Panc1 (cell line): ENCODE measurements at regions of chr10 and their contacts with region 1.

Region 1: GRCh38 chr10:77710759-77711682 is 73.4 kb upstream of the KCNMA1 start:
- DNase-seq: peak; percentile 36
- ATAC-seq: peak; percentile 98
- H3K4me3 ChIP-seq: peak overlapping the region; percentile 28 to 42
- H3K27ac ChIP-seq: no peak overlapping the region
- H3K4me1 ChIP-seq: no peaks in the 10 kb centered on the region; the same call in 1 of the 2 replicates
- H3K27me3 ChIP-seq: no peaks in the 10 kb centered on the region
- CTCF ChIP-seq: peak; percentile 100

Region 2: GRCh38 chr10:77165445-77166208 is 545.4 kb before region 1 on chr10:
- CTCF ChIA-PET with region 1: interaction called, 6 read pairs
- POLR2A ChIA-PET with region 1: no interaction called
- in situ Hi-C with region 1: no loop called
- intact Hi-C with region 1: loop called (anchors 5 kb)
- DNase-seq: peak; percentile 88
- ATAC-seq: peak; percentile 78
- H3K4me3 ChIP-seq: no peak overlapping the region
- H3K27ac ChIP-seq: peak overlapping the region; percentile 0; the same call in 1 of the 2 replicates
- H3K4me1 ChIP-seq: peaks cover 28% of the 10 kb centered on the region
- H3K27me3 ChIP-seq: no peaks in the 10 kb centered on the region
- CTCF ChIP-seq: no peak; the same call in 1 of the 2 replicates

Region 3: GRCh38 chr10:77207828-77208185 is 503.2 kb before region 1 on chr10:
- CTCF ChIA-PET with region 1: interaction called, 13 read pairs
- POLR2A ChIA-PET with region 1: no interaction called
- in situ Hi-C with region 1: no loop called
- intact Hi-C with region 1: no loop called
- DNase-seq: no peak
- ATAC-seq: no peak
- H3K4me3 ChIP-seq: no peak overlapping the region
- H3K27ac ChIP-seq: no peak overlapping the region
- H3K4me1 ChIP-seq: no peaks in the 10 kb centered on the region
- H3K27me3 ChIP-seq: no peaks in the 10 kb centered on the region
- CTCF ChIP-seq: no peak

Region 4: GRCh38 chr10:78023741-78024140 is 312.7 kb after region 1 on chr10:
- CTCF ChIA-PET with region 1: interaction called, 15 read pairs
- POLR2A ChIA-PET with region 1: no interaction called
- in situ Hi-C with region 1: no loop called
- intact Hi-C with region 1: no loop called
- DNase-seq: no peak
- ATAC-seq: no peak
- H3K4me3 ChIP-seq: no peak overlapping the region
- H3K27ac ChIP-seq: no peak overlapping the region
- H3K4me1 ChIP-seq: peaks cover 6% of the 10 kb centered on the region; the same call in 1 of the 2 replicates
- H3K27me3 ChIP-seq: no peaks in the 10 kb centered on the region
- CTCF ChIP-seq: no peak